Activated CD8-positive, alpha-beta T cell treated with anti-CD3 and anti-CD28 coated beads, Interleukin-2, amount 10 ng/mL, durations not matched to agents 7 days and 5 days (primary cell): ENCODE measurements at regions of chr12 and their contacts with region 1.

Region 1: GRCh38 chr12:67592216-67593011 is 56.1 kb upstream of the DYRK2 start:
- DNase-seq: peak; percentile 53
- ATAC-seq: peak; percentile 77
- H3K4me3 Mint-ChIP-seq: peak overlapping the region; percentile 13
- H3K27ac Mint-ChIP-seq: peak overlapping the region; percentile 81
- H3K4me1 Mint-ChIP-seq: peaks cover 49% of the 10 kb centered on the region
- H3K27me3 Mint-ChIP-seq: no peaks in the 10 kb centered on the region

Region 2: GRCh38 chr12:67578976-67579661 is 13.3 kb before region 1 on chr12:
- CTCF ChIA-PET with region 1: interaction called, 21 read pairs
- POLR2A ChIA-PET with region 1: interaction called, 5 read pairs
- DNase-seq: peak; percentile 61
- ATAC-seq: peak; percentile 82
- H3K4me3 Mint-ChIP-seq: peak overlapping the region; percentile 34
- H3K27ac Mint-ChIP-seq: peak overlapping the region; percentile 94
- H3K4me1 Mint-ChIP-seq: peaks cover 37% of the 10 kb centered on the region
- H3K27me3 Mint-ChIP-seq: no peaks in the 10 kb centered on the region

Region 3: GRCh38 chr12:67630373-67631088 is 38.1 kb after region 1 on chr12:
- CTCF ChIA-PET with region 1: interaction called, 13 read pairs
- POLR2A ChIA-PET with region 1: interaction called, 4 read pairs
- DNase-seq: peak; percentile 94
- ATAC-seq: peak; percentile 99
- H3K4me3 Mint-ChIP-seq: peak overlapping the region; percentile 45
- H3K27ac Mint-ChIP-seq: peak overlapping the region; percentile 93
- H3K4me1 Mint-ChIP-seq: peaks cover 62% of the 10 kb centered on the region
- H3K27me3 Mint-ChIP-seq: peaks cover 2% of the 10 kb centered on the region

Region 4: DNA sequence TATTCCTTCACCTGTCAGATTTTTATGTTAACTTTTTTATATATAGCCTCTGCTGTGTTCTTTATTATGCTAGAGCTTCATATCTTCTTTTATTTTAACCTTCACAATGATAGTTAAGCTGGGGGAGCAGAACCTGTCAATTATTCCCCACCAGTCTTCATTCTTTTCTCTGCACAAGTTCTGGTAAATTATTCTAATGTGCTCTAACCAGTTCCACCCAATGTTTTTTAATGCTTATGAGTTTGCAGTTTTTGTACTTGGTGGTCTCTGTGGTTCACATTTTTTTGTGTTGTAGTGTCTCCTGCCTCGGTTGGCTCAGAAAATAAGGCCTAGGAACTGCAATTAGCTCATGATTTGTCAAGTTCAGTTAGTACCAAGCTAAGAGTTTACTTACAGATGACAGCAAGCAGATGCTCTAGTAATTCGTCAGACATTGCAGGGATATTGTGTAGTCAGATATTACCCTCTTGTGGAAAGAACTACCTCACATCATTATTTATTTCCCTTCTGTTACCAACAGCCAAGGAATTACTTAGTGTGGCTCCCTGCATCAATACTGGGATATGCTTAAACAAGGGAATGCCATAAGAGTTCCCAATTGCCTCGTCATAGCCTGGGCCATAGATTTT is 70.6 kb after region 1 on chr12:
- CTCF ChIA-PET with region 1: no interaction called
- POLR2A ChIA-PET with region 1: no interaction called
- DNase-seq: no peak
- ATAC-seq: no peak
- H3K4me3 Mint-ChIP-seq: no peak overlapping the region
- H3K27ac Mint-ChIP-seq: no peak overlapping the region
- H3K4me1 Mint-ChIP-seq: peaks cover 75% of the 10 kb centered on the region
- H3K27me3 Mint-ChIP-seq: no peaks in the 10 kb centered on the region